ENCODE measurements at regions of chr4 and their contacts with region 1.

Region 1: DNA sequence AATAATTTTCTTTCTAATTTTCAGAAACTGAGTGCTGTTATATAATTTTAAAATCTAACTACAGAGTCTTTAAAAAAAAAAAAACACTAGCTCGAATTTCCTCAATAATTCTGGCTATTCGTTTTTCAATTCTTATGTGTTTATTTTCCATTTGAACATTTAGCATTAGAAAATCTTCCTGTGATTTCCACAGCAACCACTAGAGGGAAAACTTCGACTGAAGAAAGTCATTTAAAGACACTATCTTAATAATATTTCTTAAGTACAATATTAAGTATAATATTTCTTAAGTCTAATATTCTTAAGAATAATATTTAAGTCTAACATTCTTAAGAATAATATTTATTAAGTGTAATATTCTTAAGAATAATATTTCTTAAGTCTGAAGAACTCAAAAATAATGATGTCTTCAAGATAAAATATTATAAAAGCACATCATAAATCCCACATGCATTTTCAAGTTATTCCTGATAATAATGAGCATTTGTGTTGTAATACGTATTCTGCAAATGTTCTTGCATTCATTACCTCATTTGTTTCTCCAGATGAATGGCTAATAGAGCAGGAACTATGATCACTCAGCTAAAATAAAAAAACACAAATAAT is 118.4 kb upstream of the WDR17 start:
- DNase-seq: no peak
- H3K4me3 ChIP-seq: peak overlapping the region in 3 of 4 donors; percentile 17 to 31 (median 24)
- H3K27ac ChIP-seq: peak overlapping the region in 3 of 4 donors; percentile 26 to 45 (median 40)
- H3K4me1 ChIP-seq: peaks cover 4 to 26% (median 15%) of the 10 kb centered on the region in 4 donors
- H3K27me3 ChIP-seq: no peaks in the 10 kb centered on the region
- CTCF ChIP-seq: peak; percentile 70 to 80 (median 70)
- EP300 ChIP-seq: no peak
- POLR2A ChIP-seq: no peak

Region 2: DNA sequence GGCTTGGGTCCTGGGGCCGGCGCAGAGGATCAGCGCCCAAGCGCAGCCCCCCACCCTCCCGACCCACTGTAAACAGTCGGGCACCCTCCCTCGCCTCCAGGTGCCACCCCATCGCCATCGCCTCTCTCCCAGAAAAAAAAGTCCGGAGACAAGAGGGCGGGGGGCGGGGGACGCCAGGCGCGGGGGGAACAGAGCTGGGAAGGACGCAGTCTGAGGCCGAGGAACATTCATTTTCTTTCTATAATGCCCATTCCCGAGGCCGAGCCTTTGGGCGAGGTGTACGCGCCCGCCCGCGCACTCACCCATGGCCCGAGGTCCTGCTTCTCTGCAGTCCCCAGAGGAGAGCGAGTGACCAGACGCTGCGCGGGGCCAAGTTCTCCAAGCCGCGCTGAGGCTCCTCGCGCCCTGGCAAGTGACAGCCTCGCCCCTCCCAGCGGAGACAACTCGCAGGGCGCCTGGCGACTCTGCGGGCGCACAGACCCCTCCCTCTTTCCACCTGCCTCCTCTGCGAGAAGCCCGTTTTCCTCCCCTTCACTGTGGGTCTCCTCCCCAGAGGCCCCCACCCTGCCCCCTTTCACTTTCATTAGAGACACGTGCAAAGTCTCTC is 54.9 kb after region 1 on chr4:
- intact Hi-C with region 1: loop called (anchors 5 kb)
- DNase-seq: no peak
- H3K4me3 ChIP-seq: peak overlapping the region; percentile 72 to 82 (median 75)
- H3K27ac ChIP-seq: peak overlapping the region; percentile 89 to 91 (median 90)
- H3K4me1 ChIP-seq: peaks cover 9 to 47% (median 35%) of the 10 kb centered on the region in 4 donors
- H3K27me3 ChIP-seq: peaks cover 0 to 6% (median 0%) of the 10 kb centered on the region in 4 donors
- CTCF ChIP-seq: no peak
- EP300 ChIP-seq: no peak
- POLR2A ChIP-seq: no peak

Region 3: GRCh38 chr4:176034499-176034898 is 87.3 kb after region 1 on chr4:
- intact Hi-C with region 1: loop called (anchors 5 kb)
- DNase-seq: no peak
- H3K4me3 ChIP-seq: no peak overlapping the region
- H3K27ac ChIP-seq: no peak overlapping the region
- H3K4me1 ChIP-seq: peaks cover 0 to 15% (median 10%) of the 10 kb centered on the region in 4 donors
- H3K27me3 ChIP-seq: no peaks in the 10 kb centered on the region
- CTCF ChIP-seq: peak; percentile 48 to 59 (median 56)
- EP300 ChIP-seq: no peak
- POLR2A ChIP-seq: no peak

Region 4: DNA sequence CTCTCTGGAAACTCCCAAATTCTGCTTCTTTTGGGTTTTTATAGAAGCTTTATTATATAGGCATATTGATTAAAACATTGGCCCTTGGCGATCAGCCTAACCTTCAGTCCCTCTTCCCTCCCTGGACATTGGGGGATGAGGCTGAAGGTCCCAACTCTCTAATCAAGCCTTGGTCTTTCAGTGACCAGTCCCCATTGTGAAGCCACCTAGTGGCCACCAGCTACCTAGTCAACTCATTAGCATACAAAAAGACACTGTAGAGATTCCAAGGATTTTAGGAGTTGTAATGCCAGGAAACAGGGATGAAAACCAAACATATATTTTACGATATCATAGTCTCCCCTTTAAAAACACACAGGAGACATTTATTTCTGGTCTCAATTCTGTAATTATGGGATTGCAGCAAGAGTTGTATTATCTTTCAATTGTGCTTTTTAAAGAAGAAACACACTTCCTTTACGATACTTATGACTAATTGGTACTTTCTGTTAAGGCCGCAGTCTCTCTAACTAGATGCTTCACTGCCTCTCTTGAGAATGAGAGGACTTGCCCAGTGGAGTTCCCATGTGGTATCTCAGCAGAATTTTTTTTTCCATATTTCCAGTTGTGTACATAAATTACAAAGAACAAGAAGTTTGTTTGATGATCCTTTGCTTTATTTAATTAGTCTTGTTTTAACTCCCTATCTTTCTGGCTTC is 176.6 kb after region 1 on chr4:
- intact Hi-C with region 1: loop called (anchors 10 kb)
- DNase-seq: no peak
- H3K4me3 ChIP-seq: no peak overlapping the region
- H3K27ac ChIP-seq: no peak overlapping the region
- H3K4me1 ChIP-seq: no peaks in the 10 kb centered on the region
- H3K27me3 ChIP-seq: no peaks in the 10 kb centered on the region
- CTCF ChIP-seq: peak; percentile 25 to 58 (median 43)
- EP300 ChIP-seq: no peak
- POLR2A ChIP-seq: no peak

Region 5: DNA sequence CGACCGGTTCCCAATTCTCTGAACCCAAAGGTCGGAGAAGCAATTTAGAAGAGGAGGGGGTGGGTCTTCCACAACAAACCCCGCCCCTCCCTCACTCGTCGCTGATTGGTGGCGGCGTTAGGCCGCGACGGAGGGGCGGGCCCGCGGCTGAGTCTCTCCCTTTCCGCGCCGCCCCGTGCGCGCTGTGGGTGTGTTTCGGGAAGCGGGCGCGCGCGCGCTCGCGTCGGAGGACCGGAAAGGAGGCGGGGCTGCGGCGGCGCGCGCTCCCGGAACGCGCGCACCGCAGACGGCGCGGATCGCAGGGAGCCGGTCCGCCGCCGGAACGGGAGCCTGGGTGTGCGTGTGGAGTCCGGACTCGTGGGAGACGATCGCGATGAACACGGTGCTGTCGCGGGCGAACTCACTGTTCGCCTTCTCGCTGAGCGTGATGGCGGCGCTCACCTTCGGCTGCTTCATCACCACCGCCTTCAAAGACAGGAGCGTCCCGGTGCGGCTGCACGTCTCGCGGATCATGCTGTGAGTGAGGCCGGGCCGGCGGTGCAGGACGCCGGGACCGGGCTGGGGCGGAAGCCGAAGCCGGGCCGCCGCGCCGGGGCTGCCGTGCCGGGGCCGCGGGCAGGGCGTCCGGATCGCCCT is 372.6 kb after region 1 on chr4 and contains the start of gene SPCS3:
- intact Hi-C with region 1: loop called (anchors 10 kb)
- DNase-seq: peak; percentile 98
- H3K4me3 ChIP-seq: peak within 1 kb of the TSS; percentile 85 to 98 (median 94)
- H3K27ac ChIP-seq: peak within 1 kb of the TSS; percentile 96 to 100 (median 98)
- H3K4me1 ChIP-seq: peaks cover 28 to 45% (median 43%) of the 10 kb centered on the region in 4 donors
- H3K27me3 ChIP-seq: no peaks in the 10 kb centered on the region
- CTCF ChIP-seq: no peak
- EP300 ChIP-seq: no peak
- POLR2A ChIP-seq: peak; percentile 96
- total RNA-seq, gene SPCS3: 35.5 to 48.4 (median 46.0) TPM